ENCODE measurements at regions of chr15 and their contacts with region 1.

Region 1: DNA sequence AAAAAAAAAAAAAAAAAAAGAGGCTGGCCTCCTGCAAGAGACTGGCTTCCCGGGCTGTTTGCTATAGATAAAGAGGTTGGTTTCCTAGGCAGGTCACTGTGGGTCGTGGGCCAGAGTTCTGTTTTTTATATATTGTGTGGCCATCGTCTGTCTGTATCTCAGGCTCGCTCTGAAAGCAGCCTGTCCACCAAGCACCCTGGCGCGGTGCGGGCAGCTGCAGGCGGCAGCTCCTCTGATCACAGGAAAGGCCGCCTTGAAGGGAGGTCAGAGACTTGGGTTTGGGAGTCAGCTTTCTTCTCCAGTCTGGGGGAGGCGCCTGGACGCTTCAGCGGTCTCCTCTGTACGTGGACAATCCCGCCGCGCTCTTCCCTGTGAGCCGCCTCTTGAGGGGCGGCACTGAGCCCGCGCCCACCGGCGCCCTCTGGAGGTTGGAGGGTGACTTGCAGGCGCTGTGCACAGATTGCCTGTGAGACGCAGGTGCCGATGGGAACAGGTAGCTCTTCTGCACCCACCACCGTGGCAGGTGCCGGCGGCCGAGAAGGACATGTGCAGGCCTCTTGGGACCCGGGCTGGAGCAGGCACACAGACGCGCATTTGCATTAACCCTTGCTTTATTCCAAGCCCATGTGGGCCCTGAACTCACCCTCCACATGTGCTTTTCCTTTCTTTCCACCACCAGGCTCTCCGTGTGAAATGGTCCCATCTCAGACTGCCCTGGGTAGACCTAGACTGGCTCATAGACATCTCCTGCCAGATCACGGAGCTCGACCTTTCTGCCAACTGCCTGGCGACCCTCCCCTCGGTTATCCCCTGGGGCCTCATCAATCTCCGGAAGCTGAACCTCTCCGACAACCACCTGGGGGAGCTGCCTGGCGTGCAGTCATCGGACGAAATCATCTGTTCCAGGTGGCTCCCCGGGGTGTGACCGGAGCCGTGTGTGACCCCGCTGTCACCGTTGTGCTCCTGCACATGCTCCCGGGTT is 89.3 kb downstream of the LRRK1 start:
- DNase-seq: peak; percentile 92

Region 2: DNA sequence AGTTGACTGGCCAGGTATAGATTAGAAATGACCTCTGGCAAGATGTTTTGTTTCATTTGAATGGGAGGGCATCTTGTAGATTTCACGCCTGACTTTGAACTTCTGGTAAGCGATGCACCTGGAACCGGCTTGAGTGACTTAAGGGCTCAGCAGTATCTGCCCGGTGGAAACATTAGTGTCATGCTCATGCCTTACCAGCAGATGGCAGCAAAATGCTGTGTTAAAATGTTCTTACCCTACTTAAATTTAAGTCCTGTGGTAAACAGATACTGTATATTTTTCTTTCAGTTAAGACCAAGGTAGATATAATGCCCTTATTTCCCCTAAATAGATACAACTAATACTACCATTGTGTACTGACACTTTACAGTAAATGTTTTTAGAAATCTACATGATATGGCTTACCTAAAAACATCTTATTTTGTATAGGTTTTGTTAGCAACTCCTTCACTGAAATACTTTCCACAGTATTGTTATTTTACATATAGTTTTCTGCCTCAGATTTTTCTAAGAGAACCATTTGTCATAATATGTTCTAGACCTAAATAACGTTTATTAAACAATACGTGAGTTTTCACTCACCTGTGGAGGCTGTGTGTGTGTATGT is 380.6 kb before region 1 on chr15:
- CTCF ChIA-PET with region 1: interaction called, 10 read pairs
- POLR2A ChIA-PET with region 1: interaction called, 4 read pairs
- DNase-seq: peak; percentile 77

Region 3: GRCh38 chr15:100918034-100918689 is 90.3 kb before region 1 on chr15:
- CTCF ChIA-PET with region 1: interaction called, 34 read pairs
- POLR2A ChIA-PET with region 1: interaction called, 3 read pairs
- DNase-seq: peak; percentile 86

Region 4: DNA sequence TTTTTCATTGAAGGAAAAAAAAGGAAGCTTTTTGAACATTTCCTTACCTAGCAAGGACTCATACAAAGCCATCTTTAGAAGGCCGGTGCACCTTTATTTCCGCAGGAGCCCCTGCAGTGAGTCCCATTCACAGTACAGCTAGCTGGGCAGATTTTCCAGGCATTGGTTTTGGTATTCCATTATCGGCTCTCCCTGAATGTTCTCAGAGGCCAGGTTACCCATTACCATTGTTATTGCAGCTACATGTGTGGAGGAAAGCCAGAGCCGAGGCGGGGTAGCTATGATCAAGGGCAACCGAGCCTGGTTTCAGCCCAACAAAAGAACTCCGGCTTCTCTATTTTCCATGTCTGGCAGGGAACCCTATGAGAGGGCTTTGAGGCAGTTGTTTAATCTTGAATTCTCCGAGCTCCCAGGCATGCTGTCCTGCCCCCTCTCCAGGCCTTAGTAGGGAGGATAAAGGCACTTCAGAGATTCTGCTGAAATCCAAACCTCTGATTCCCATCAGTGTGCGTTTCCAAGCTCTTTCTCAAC is 11.0 kb after region 1 on chr15:
- CTCF ChIA-PET with region 1: interaction called, 19 read pairs
- POLR2A ChIA-PET with region 1: interaction called, 5 read pairs
- DNase-seq: no peak

Region 5: GRCh38 chr15:101251830-101252820 is 243.7 kb after region 1 on chr15 and contains the start of gene CHSY1:
- CTCF ChIA-PET with region 1: interaction called, 12 read pairs
- POLR2A ChIA-PET with region 1: interaction called, 4 read pairs
- DNase-seq: peak; percentile 75

Region 6: DNA sequence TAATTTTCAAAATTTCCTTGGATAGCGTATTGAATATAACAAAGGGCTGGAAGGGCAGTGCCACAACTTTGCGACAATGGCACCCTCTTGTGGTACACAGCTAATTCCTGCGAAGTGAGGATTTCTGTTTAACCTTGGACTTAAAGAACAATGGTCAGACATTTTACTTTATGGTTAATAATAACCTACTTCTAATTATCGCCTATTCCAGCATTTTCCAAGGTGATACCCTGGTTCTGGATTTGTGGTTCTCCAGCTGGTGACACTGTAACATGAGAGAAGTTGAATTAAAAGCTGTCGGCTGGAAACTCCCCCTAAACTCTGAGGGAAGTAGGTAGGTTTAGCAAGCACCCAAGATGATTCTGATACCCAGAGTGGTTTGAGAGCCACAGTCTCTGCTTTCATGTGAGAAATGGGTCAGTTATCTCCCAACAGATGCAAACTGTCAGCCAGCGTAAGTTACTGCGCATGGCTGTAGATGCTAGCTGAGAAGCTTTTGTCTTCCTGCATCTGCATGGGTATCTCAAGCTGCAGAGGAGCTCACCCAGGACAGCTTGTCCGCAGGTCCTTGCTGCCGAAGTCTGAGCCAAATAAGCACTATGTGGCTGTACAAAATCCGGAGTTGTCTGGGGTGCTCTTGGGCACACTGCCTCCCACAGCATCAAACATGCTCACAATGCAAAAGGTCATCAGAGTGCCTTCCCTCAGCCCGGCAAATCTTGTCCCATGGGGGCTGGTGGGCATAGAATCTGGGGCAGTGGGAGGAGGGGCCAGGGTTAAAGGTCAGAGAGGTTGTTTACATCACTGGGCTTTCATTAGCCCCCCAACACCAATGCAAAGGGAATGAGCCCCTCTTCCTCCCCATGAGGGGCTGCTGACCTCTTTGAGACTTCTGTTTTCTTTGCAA is 250.0 kb after region 1 on chr15:
- CTCF ChIA-PET with region 1: interaction called, 16 read pairs
- POLR2A ChIA-PET with region 1: interaction called, 4 read pairs
- DNase-seq: peak; percentile 62

Measured in HEK293T (cell line).